Esophagus muscularis mucosa (tissue), 4 donors: ENCODE measurements at regions of chr20 and their contacts with region 1.

Region 1: DNA sequence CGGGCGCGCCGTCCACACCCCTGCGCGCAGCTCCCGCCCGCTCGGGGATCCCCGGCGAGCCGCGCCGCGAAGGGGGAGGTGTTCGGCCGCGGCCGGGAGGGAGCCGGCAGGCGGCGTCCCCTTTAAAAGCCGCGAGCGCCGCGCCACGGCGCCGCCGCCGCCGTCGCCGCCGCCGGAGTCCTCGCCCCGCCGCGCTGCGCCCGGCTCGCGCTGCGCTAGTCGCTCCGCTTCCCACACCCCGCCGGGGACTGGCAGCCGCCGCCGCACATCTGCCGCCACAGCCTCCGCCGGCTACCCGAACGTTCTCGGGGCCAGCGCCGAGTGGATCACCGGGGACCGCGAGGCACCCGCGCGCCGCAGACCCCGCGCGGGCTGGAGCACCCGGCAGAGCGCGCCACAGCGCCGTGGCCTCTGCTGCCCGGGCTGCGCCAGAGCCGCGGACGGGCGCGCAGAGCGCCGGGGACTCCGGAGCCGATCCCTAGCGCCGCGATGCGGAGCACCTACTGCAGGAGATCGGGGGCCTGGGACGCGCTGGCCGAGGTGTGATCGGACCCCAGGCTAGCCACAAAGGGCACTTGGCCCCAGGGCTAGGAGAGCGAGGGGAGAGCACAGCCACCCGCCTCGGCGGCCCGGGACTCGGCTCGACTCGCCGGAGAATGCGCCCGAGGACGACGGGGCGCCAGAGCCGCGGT is at the start of gene BMP2:
- DNase-seq: no peak
- H3K4me3 ChIP-seq: peak within 1 kb of the TSS; percentile 66 to 78 (median 76)
- H3K27ac ChIP-seq: peak within 1 kb of the TSS; percentile 57 to 79 (median 70)
- H3K4me1 ChIP-seq: peaks cover 15 to 39% (median 31%) of the 10 kb centered on the region in 4 donors
- H3K27me3 ChIP-seq: peaks cover 0 to 11% (median 8%) of the 10 kb centered on the region in 4 donors
- CTCF ChIP-seq: no peak
- EP300 ChIP-seq: no peak
- POLR2A ChIP-seq: no peak
- total RNA-seq, gene BMP2: 5.8 to 8.6 (median 7.2) TPM

Region 2: GRCh38 chr20:6269168-6269873 is 498.4 kb before region 1 on chr20:
- intact Hi-C with region 1: no loop called
- DNase-seq: no peak
- H3K4me3 ChIP-seq: no peak overlapping the region
- H3K27ac ChIP-seq: no peak overlapping the region
- H3K4me1 ChIP-seq: peaks cover 0 to 8% (median 5%) of the 10 kb centered on the region in 4 donors
- H3K27me3 ChIP-seq: no peaks in the 10 kb centered on the region
- CTCF ChIP-seq: no peak
- EP300 ChIP-seq: no peak
- POLR2A ChIP-seq: no peak

Region 3: GRCh38 chr20:7285918-7286556 is 518.4 kb after region 1 on chr20:
- intact Hi-C with region 1: loop called (anchors 2 kb)
- DNase-seq: no peak
- H3K4me3 ChIP-seq: no peak overlapping the region
- H3K27ac ChIP-seq: no peak overlapping the region
- H3K4me1 ChIP-seq: peaks cover 0 to 7% (median 0%) of the 10 kb centered on the region in 4 donors
- H3K27me3 ChIP-seq: no peaks in the 10 kb centered on the region
- CTCF ChIP-seq: peak; percentile 53 to 80 (median 76)
- EP300 ChIP-seq: no peak
- POLR2A ChIP-seq: no peak

Region 4: DNA sequence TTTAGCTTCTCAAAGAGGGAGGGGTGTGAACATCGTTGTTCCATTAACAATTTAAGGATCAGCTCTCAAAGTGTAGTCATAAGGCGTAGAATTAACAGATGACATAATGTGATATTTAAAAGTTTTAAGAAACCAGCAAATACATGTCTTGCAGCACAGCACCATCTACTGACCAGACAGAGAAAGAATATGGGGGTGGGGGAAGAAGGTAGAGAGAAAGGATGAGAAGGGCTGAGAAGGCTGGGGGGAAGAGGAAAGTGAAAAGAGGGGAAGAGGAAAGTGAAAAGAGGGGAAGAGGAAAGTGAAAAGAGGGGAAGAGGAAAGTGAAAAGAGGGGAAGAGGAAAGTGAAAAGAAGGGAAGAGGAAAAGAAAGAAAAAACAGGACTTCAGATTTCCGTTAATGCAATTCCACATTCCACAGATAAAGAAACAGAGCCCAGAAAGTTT is 1091.7 kb after region 1 on chr20:
- intact Hi-C with region 1: loop called (anchors 5 kb)
- DNase-seq: no peak
- H3K4me3 ChIP-seq: no peak overlapping the region
- H3K27ac ChIP-seq: no peak overlapping the region
- H3K4me1 ChIP-seq: peaks cover 0 to 7% (median 3%) of the 10 kb centered on the region in 4 donors
- H3K27me3 ChIP-seq: no peaks in the 10 kb centered on the region
- CTCF ChIP-seq: peak; percentile 50 to 67 (median 53)
- EP300 ChIP-seq: no peak
- POLR2A ChIP-seq: no peak